ENCODE measurements at regions of chr1 and their contacts with region 1.

Region 1: DNA sequence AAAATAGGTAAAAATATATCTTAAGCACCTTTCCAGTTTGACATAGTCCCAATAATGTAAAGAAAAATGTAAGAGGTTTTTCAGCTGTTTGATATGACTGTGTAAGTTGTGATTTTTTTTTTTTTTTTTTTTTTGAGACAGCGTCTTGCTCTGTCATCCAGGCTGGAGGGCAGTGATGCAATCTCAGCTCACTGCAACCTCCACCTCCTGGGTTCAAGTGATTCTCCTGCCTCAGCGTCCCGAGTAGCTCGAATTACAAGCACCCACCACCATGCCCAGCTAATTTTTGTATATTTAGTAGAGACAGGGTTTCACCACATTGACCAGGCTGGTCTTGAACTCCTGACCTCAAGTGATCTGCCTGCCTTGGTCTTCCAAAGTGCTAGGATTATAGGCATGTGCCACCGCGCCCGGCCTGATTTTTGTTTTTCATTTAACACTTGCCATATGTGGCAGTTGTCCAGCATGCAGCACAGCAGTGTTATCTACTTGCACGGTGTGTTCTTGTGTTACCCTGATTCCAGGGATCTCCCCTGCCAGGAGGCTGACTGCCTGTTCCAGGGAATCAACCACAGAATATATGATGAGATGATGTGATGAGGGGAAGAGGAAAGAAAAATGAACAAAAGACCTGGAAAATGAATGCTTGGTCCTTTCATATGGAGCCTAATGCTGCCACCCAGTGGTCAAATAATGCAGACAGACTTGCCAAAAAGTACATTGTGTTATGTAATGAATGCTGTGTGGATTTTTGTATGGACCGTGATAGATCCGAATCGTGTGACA is 79.0 kb downstream of the RAVER2 start:
- DNase-seq: peak in 1 of 2 donors; percentile 77
- H3K4me3 ChIP-seq: no peak overlapping the region
- H3K27ac ChIP-seq: no peak overlapping the region
- H3K4me1 ChIP-seq: peaks cover 0 to 7% (median 0%) of the 10 kb centered on the region in 4 donors
- H3K27me3 ChIP-seq: no peaks in the 10 kb centered on the region
- CTCF ChIP-seq: peak; percentile 85 to 88

Region 2: GRCh38 chr1:64072089-64072793 is 751.6 kb before region 1 on chr1:
- intact Hi-C with region 1: no loop called
- DNase-seq: no peak
- H3K4me3 ChIP-seq: no peak overlapping the region
- H3K27ac ChIP-seq: peak overlapping the region in 1 of 2 donors; percentile 2
- H3K4me1 ChIP-seq: peaks cover 0 to 58% (median 20%) of the 10 kb centered on the region in 4 donors
- H3K27me3 ChIP-seq: no peaks in the 10 kb centered on the region
- CTCF ChIP-seq: no peak

Region 3: GRCh38 chr1:64268653-64269557 is 555.0 kb before region 1 on chr1:
- intact Hi-C with region 1: loop called (anchors 5 kb)
- DNase-seq: peak; percentile 52 to 75
- H3K4me3 ChIP-seq: no peak overlapping the region
- H3K27ac ChIP-seq: no peak overlapping the region
- H3K4me1 ChIP-seq: peaks cover 0 to 6% (median 2%) of the 10 kb centered on the region in 4 donors
- H3K27me3 ChIP-seq: no peaks in the 10 kb centered on the region
- CTCF ChIP-seq: peak; percentile 68 to 75

Region 4: DNA sequence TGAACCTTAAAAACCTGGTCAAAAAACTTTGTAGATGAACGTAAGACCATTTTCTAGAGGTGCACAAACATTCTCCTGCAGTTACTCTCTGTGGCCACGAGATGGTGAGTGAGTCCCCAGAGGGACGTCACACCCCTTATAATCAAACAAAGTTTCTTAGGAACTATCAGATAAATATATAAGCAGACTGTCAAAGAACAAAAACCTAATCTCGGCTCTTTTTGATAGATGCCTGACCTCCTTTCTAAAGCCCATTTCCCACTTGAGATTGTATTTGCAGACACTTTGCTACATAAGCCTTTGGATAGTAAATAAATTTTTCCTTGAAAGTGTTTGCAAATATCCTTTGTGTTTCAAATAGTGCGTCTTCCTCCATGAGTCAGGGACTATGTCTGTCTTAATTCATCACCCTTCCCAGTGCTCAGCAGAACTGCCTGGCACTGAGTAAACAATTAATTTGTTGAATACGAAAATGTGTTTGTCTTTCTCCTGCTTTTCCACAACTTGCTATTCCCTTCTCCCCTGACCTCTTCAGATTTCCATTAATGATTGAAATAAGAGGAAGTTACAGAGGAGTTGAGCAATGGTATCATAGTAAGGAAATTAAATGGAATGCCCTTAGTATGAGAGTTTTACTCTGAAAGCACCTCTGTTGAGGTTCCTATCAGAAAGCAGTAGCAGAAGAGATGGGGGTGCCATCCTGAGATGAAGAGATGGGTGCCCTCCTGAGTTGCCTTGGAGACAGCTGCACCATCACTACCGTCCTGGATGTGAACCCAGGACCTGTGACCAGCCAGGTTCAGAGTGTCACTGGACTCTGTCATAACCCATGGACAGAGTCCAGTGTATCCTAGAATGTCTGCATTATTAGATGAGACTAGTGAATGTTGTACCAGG is 136.8 kb before region 1 on chr1:
- intact Hi-C with region 1: loop called (anchors 5 kb)
- DNase-seq: no peak
- H3K4me3 ChIP-seq: no peak overlapping the region
- H3K27ac ChIP-seq: no peak overlapping the region
- H3K4me1 ChIP-seq: peaks cover 0 to 7% (median 0%) of the 10 kb centered on the region in 4 donors
- H3K27me3 ChIP-seq: no peaks in the 10 kb centered on the region
- CTCF ChIP-seq: peak; percentile 78 to 87

Region 5: GRCh38 chr1:64744492-64745180 is 79.2 kb before region 1 on chr1 and contains the start of gene RAVER2:
- intact Hi-C with region 1: loop called (anchors 10 kb)
- DNase-seq: peak; percentile 54 to 84
- H3K4me3 ChIP-seq: peak within 1 kb of the TSS; percentile 75 to 79
- H3K27ac ChIP-seq: peak within 1 kb of the TSS; percentile 82 to 83
- H3K4me1 ChIP-seq: peaks cover 0 to 18% (median 5%) of the 10 kb centered on the region in 4 donors
- H3K27me3 ChIP-seq: no peaks in the 10 kb centered on the region
- CTCF ChIP-seq: peak in 1 of 2 experiments; percentile 32

Region 6: DNA sequence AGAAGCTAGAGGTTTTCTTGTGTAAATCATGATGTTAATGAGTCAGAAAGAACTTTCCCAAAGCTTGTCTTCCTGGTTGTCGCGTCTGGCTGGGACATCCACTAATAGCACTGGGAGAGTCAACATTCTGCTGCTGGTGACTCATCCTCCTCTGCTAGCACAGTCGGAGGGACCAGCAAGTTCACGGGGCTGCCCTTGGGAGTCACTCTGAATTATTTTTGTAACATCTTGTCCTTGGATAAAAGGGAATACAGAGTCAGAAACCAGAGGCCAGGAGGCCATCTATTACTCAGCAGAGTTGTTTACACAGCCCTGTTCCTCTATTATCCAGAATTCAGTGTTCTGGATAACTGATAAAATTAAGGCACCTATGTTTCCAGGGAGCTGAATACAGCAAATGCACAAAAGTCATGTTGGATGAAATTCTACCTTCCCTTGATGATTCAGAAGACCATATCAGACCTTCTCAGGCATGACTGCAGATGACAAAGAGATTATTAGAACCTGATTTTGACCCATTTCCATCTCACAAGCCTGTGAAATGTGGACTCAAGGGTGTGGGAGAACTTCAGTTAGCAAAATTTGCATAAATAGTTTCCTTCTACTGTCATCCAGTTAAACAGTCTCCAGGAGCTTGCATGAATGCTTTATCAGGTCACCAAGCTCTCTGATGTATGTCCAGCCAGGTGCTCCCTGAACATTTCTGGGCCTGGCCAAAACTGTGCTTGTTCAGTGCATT is 74.4 kb after region 1 on chr1:
- intact Hi-C with region 1: no loop called
- DNase-seq: peak; percentile 95 to 96
- H3K4me3 ChIP-seq: no peak overlapping the region
- H3K27ac ChIP-seq: peak overlapping the region; percentile 70 to 78
- H3K4me1 ChIP-seq: peaks cover 0 to 30% (median 17%) of the 10 kb centered on the region in 4 donors
- H3K27me3 ChIP-seq: no peaks in the 10 kb centered on the region
- CTCF ChIP-seq: no peak

Measured in tibial artery (tissue), 4 donors.